ENCODE measurements at regions of chr1 and their contacts with region 1.

Region 1: GRCh38 chr1:75115654-75116053 is 18.5 kb upstream of the LHX8 start:
- DNase-seq: no peak
- ATAC-seq: no peak
- H3K4me3 ChIP-seq: no peak overlapping the region
- H3K27ac ChIP-seq: no peak overlapping the region
- H3K4me1 ChIP-seq: no peaks in the 10 kb centered on the region
- H3K27me3 ChIP-seq: no peaks in the 10 kb centered on the region
- CTCF ChIP-seq: no peak

Region 2: DNA sequence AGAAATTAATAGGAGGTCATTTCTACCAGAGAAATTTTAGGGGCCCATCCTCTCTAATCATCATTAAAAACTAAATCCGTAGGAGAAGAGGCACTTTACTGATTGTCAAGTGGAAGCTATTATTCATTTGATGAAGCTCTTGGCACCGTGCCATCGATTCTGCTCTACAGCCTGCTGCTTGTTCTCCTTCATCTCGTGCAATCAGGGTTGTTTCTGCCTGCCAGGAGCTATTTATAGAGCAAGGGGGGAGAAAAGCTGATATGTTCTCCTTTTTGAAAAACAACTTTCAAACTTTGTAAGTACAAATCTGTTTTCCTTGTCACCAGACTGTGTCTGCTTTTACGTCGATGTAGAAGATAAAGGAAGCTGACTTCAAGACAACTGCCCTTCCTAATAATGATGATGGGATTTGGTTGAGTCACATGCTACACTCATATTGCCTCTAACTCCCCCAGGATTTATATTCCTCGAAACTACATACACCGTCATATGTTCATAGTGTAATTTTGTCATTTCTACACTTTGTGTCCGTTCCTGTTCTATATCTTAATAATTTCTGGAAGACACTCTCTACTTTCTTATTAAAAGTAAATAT is 151.0 kb before region 1 on chr1:
- CTCF ChIA-PET with region 1: no interaction called
- POLR2A ChIA-PET with region 1: no interaction called
- in situ Hi-C with region 1: no loop called
- intact Hi-C with region 1: loop called (anchors 5 kb)
- DNase-seq: no peak
- ATAC-seq: no peak
- H3K4me3 ChIP-seq: no peak overlapping the region
- H3K27ac ChIP-seq: no peak overlapping the region
- H3K4me1 ChIP-seq: no peaks in the 10 kb centered on the region
- H3K27me3 ChIP-seq: no peaks in the 10 kb centered on the region
- CTCF ChIP-seq: no peak